Psoas muscle (tissue), 8 donors: ENCODE measurements at regions of chr3 and their contacts with region 1.

Region 1: DNA sequence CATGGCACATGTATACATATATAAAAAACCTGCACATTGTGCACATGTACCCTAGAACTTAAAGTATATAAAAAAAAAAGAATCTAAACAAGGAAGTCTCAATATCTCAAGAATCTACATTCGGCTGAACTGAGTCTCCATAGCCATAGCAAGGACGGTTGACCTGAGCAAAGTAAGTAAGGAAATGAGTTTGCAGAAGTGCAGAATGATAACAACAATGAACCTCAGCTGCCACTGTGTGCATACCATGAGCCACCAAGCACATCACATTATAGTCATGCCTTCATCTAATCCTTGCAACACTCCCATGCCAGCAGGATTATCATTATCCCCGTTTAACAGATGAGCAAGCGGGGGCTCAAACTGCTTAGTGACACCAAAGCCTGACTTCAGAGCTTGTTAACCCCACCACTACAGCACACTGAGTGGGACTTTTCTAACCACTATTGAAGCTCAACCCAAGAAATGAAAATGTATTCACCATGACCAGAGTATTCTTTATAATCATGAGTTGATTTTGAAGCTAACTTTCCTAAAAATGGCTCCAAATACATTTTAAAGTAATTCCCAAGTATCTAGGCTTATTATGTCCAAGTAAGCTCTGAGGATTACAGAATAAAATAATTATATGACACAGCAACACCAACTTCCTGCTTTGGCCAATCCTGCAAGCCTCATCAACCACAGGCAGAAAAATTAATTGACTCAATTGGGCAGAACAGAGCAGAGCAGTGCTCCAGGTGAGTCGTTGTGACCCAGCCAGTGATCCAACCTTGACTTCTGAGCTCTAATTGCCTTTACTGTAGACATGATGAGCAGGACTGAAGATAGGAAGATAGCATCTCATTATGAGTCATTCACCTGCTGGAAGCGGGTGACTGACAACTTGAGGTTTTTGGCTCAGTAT is 47.3 kb upstream of the IL12A start:
- DNase-seq: no peak
- ATAC-seq: no peak
- H3K4me3 ChIP-seq: no peak overlapping the region
- H3K27ac ChIP-seq: no peak overlapping the region
- H3K4me1 ChIP-seq: no peaks in the 10 kb centered on the region
- H3K27me3 ChIP-seq: no peaks in the 10 kb centered on the region
- CTCF ChIP-seq: no peak

Region 2: GRCh38 chr3:160012108-160012507 is 70.8 kb after region 1 on chr3:
- intact Hi-C with region 1: loop called in 1 of 2 experiments (anchors 2 kb)
- DNase-seq: no peak
- ATAC-seq: no peak
- H3K4me3 ChIP-seq: no peak overlapping the region
- H3K27ac ChIP-seq: no peak overlapping the region
- H3K4me1 ChIP-seq: no peaks in the 10 kb centered on the region
- H3K27me3 ChIP-seq: no peaks in the 10 kb centered on the region
- CTCF ChIP-seq: no peak